Activated naive CD4-positive, alpha-beta T cell treated with anti-CD3 and anti-CD28 coated beads for 36 hours (primary cell): ENCODE measurements at regions of chr12 and their contacts with region 1.

Region 1: DNA sequence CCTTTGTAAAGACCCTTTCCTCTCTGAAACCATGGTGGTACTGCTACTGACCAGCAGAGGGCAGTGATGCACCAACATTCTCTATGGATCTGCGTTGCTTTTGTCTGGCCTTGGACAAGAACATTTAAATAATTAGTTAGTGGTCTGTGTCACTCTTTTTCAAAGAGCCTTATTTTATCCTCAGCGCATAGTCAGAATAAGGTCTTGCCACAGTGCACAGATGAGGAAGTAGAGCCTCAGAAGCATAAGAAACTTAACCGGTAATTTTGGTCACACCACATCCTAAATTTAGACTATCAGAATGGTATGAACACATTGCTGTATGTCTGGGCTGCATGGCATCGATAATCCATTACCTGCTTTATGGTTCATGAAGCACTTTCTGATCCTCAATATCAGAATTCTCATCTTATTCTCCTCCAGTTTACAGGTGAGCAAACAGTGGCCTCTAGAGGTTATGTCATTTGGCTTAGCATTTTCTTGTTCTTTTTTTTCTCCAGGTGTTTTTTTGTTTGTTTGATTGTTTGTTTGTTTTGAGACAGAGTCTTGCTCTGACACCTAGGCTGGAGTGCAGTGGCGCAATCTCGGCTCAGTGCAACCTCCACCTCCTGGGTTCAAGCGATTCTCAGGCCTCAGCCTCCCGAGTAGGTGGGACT is 23.7 kb upstream of the IFT81 start:
- DNase-seq: peak; percentile 77
- H3K4me3 Mint-ChIP-seq: no peak overlapping the region
- H3K27ac Mint-ChIP-seq: no peak overlapping the region
- H3K4me1 Mint-ChIP-seq: peaks cover 6% of the 10 kb centered on the region
- H3K27me3 Mint-ChIP-seq: no peaks in the 10 kb centered on the region

Region 2: GRCh38 chr12:109804820-109805761 is 295.4 kb before region 1 on chr12:
- CTCF ChIA-PET with region 1: no interaction called
- intact Hi-C with region 1: loop called (anchors 1 kb)
- DNase-seq: peak; percentile 74
- H3K4me3 Mint-ChIP-seq: no peak overlapping the region
- H3K27ac Mint-ChIP-seq: no peak overlapping the region
- H3K4me1 Mint-ChIP-seq: no peaks in the 10 kb centered on the region
- H3K27me3 Mint-ChIP-seq: no peaks in the 10 kb centered on the region

Region 3: DNA sequence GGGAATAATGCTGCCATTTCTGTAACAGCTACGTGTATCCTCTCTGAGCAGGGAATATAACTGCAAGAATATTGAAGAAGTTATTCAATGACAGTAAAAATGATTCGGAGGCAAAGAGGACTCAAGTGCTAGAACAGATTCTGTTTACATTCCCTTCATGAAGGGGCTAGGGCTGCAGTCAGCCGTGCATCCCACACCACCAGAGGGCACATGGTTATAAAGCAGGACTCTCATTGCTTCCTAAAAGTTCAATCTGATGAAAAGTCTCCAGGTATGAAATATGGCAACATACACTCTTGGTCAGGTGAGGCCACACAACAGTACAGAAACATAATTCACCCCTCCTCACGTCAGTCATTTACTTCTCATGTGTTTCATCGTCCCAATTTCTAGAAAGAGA is 166.4 kb before region 1 on chr12:
- CTCF ChIA-PET with region 1: no interaction called
- intact Hi-C with region 1: loop called (anchors 1 kb)
- DNase-seq: peak; percentile 68
- H3K4me3 Mint-ChIP-seq: no peak overlapping the region
- H3K27ac Mint-ChIP-seq: peak overlapping the region; percentile 5
- H3K4me1 Mint-ChIP-seq: no peaks in the 10 kb centered on the region
- H3K27me3 Mint-ChIP-seq: no peaks in the 10 kb centered on the region

Region 4: DNA sequence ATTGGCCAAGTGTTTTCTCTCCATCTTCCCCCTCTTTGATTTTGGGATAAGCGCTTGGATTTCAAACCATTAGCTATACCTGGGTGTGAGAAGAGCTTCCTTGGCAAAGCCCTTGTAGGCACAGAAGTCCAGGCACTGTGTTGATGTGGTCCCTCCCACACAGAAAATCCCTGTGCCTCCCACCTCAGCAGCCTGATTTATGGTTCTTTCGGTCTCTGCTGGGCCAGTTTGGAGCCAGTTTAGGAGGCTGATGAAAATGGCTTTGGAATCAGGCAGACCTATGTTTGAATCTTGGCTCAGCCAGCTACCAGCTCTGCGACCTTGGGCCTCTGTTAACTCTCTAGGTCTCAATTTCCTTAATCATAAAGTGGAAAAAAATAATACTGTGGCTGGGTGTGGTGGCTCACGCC is 14.1 kb after region 1 on chr12:
- CTCF ChIA-PET with region 1: interaction called, 13 read pairs
- intact Hi-C with region 1: no loop called
- DNase-seq: no peak
- H3K4me3 Mint-ChIP-seq: no peak overlapping the region
- H3K27ac Mint-ChIP-seq: no peak overlapping the region
- H3K4me1 Mint-ChIP-seq: no peaks in the 10 kb centered on the region
- H3K27me3 Mint-ChIP-seq: no peaks in the 10 kb centered on the region

Region 5: GRCh38 chr12:110349531-110350151 is 249.2 kb after region 1 on chr12:
- CTCF ChIA-PET with region 1: interaction called, 4 read pairs
- intact Hi-C with region 1: loop called (anchors 5 kb)
- DNase-seq: peak; percentile 78
- H3K4me3 Mint-ChIP-seq: no peak overlapping the region
- H3K27ac Mint-ChIP-seq: peak overlapping the region; percentile 69
- H3K4me1 Mint-ChIP-seq: peaks cover 35% of the 10 kb centered on the region
- H3K27me3 Mint-ChIP-seq: peaks cover 2% of the 10 kb centered on the region

Region 6: DNA sequence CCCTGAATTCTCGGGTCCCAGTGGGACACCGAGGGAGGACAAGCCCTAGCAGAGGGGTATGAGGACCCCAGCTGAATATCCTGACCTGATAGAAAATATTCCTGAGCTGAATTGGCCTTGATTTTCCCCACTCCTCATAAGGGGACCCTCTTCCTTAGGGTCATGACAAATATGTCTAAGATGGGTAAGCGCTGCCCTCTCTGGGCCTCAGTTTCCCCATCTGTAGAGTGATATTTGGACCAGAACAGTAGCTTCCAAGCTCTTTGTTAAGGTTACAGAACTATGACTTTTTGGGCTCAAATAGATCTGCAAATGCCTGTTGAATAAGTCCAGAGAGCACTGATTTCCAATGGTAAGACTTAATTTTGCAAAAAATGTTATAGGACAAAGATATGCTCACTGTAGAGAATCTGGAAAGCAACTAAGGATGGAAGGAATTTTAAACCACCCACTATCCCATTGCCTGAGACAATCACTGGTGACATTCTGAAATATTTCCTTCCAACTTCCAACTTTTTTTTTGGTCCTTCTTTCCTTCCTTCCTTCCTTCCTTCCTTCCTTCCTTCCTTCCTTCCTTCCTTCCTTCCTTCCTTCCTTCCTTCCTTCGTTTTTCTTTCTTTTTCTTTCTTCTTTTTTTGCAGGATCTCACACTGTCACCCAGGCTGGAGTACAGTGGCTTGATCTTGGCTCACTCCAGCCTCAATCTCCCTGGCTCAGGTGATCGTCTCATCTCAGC is 788.0 kb after region 1 on chr12:
- CTCF ChIA-PET with region 1: no interaction called
- intact Hi-C with region 1: loop called (anchors 5 kb)
- DNase-seq: no peak
- H3K4me3 Mint-ChIP-seq: no peak overlapping the region
- H3K27ac Mint-ChIP-seq: no peak overlapping the region
- H3K4me1 Mint-ChIP-seq: peaks cover 8% of the 10 kb centered on the region
- H3K27me3 Mint-ChIP-seq: no peaks in the 10 kb centered on the region